CD8-positive, alpha-beta T cell (primary cell): ENCODE measurements at regions of chr6 and their contacts with region 1.

Region 1: GRCh38 chr6:2999618-3000557 is at the start of gene NQO2:
- DNase-seq: peak; percentile 83 to 96 (median 91)
- ATAC-seq: peak; percentile 72
- H3K4me3 ChIP-seq: peak within 1 kb of the TSS; percentile 83 to 98
- H3K4me3 Mint-ChIP-seq: peak within 1 kb of the TSS; percentile 91
- H3K27ac ChIP-seq: peak within 1 kb of the TSS; percentile 70 to 75
- H3K27ac Mint-ChIP-seq: peak within 1 kb of the TSS; percentile 92
- H3K4me1 ChIP-seq: peaks cover 13% of the 10 kb centered on the region
- H3K4me1 Mint-ChIP-seq: peaks cover 15% of the 10 kb centered on the region
- H3K27me3 ChIP-seq: no peaks in the 10 kb centered on the region
- H3K27me3 Mint-ChIP-seq: no peaks in the 10 kb centered on the region
- CTCF ChIP-seq: no peak
- total RNA-seq, gene NQO2: 3.8 to 5.5 TPM

Region 2: DNA sequence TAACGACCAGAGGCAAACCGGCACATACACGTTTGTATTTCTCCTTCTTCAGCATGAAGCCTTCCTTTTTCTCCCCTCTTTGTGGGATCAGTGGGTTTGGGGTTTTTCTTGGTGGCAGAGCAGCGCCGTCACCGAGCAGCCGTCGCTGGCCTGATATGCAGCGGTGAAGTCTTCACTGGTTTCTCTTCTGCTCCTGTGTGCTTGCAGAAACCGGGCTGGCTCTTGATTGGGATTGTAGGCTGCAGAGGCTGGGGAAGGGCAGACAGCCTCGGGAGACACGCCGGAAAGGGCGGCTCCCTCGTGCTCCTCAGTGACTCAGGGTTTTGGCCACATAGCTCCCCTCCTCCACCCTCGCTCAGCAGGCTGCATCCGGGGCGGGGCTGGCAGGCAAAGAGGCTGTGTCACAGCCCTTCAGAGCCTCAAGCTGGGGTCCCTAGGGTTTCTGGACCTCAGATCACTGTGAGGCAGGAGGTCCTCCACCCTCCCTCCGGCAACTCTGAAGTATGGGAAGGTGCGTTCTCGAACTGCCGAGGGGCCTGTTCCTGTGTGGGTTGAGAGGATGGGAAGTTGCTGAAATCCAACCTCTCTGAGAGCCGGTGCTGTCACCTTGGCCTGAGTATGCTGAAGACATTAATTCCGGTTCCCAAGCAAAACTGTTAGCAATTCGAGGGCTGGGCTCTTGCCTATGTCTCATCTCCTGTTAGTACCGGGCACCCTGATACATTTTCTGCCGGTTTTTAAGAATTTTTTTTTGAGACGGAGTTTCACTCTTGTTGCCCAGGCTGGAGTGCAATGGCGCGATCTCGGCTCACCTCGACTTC is 24.0 kb after region 1 on chr6:
- CTCF ChIA-PET with region 1: interaction called, 13 read pairs
- POLR2A ChIA-PET with region 1: interaction called, 11 read pairs
- intact Hi-C with region 1: loop called (anchors 1 to 2 kb)
- DNase-seq: peak; percentile 55 to 93 (median 87)
- ATAC-seq: peak; percentile 88
- H3K4me3 ChIP-seq: peak overlapping the region; percentile 71 to 74
- H3K4me3 Mint-ChIP-seq: peak overlapping the region; percentile 88
- H3K27ac ChIP-seq: peak overlapping the region; percentile 39 to 86
- H3K27ac Mint-ChIP-seq: peak overlapping the region; percentile 86
- H3K4me1 ChIP-seq: peaks cover 40% of the 10 kb centered on the region
- H3K4me1 Mint-ChIP-seq: peaks cover 46% of the 10 kb centered on the region
- H3K27me3 ChIP-seq: no peaks in the 10 kb centered on the region
- H3K27me3 Mint-ChIP-seq: no peaks in the 10 kb centered on the region
- CTCF ChIP-seq: no peak

Region 3: DNA sequence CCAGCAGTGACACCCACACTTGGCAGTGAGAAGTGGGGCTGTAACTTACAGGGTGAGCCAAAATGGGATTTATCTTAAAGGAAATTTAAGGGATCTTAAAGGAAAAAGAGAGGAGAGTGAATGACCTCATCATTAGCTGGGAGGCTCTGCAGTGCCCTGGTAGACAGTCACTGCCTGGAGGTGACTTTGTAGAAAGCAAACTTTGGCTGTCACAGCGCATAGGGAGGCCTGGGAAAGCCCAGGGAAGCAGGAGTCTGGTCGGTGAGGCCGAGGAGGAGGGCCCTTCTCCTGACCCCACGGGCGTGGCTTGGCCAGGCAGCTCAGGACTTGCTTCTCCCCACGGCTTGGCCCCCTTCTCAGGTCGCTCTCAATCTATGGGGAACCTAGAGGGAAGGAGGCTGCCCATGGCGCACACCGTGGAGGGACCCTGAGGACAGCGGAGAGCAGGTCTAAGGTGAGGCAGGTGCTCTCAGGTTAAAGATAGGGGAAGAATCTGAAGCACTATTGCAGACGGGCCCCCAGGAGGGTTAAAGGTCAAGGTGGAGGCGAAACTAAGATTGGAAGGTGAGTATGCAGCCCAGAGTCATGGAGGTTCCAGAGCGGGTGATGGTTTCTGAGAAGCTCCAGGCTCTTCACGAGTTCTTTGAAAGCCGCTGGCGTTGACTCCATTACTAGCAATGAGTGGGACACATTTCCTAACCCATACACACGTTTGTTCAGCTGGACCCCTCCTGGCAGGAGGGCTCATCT is 52.8 kb after region 1 on chr6:
- CTCF ChIA-PET with region 1: interaction called, 21 read pairs
- POLR2A ChIA-PET with region 1: interaction called, 23 read pairs
- intact Hi-C with region 1: loop called (anchors 1 kb)
- DNase-seq: no peak
- ATAC-seq: no peak
- H3K4me3 ChIP-seq: no peak overlapping the region
- H3K4me3 Mint-ChIP-seq: peak overlapping the region; percentile 70
- H3K27ac ChIP-seq: no peak overlapping the region
- H3K27ac Mint-ChIP-seq: no peak overlapping the region
- H3K4me1 ChIP-seq: peaks cover 8% of the 10 kb centered on the region
- H3K4me1 Mint-ChIP-seq: peaks cover 13% of the 10 kb centered on the region
- H3K27me3 ChIP-seq: no peaks in the 10 kb centered on the region
- H3K27me3 Mint-ChIP-seq: no peaks in the 10 kb centered on the region
- CTCF ChIP-seq: no peak

Region 4: GRCh38 chr6:3068329-3069214 is 68.7 kb after region 1 on chr6 and contains the start of gene RIPK1:
- CTCF ChIA-PET with region 1: interaction called, 5 read pairs
- POLR2A ChIA-PET with region 1: interaction called, 15 read pairs
- intact Hi-C with region 1: loop called (anchors 1 kb)
- DNase-seq: peak; percentile 85 to 98 (median 93)
- ATAC-seq: peak; percentile 74
- H3K4me3 ChIP-seq: peak within 1 kb of the TSS; percentile 67 to 95
- H3K4me3 Mint-ChIP-seq: peak within 1 kb of the TSS; percentile 98
- H3K27ac ChIP-seq: peak within 1 kb of the TSS; percentile 93 to 96
- H3K27ac Mint-ChIP-seq: peak within 1 kb of the TSS; percentile 99
- H3K4me1 ChIP-seq: peaks cover 39% of the 10 kb centered on the region
- H3K4me1 Mint-ChIP-seq: peaks cover 62% of the 10 kb centered on the region
- H3K27me3 ChIP-seq: no peaks in the 10 kb centered on the region
- H3K27me3 Mint-ChIP-seq: no peaks in the 10 kb centered on the region
- CTCF ChIP-seq: peak; percentile 33
- total RNA-seq, gene RIPK1: 18.6 to 19.7 TPM

Region 5: GRCh38 chr6:3157131-3157927 is 157.4 kb after region 1 on chr6 and contains the start of gene TUBB2A:
- CTCF ChIA-PET with region 1: no interaction called
- POLR2A ChIA-PET with region 1: no interaction called
- intact Hi-C with region 1: loop called in 1 of 2 experiments (anchors 1 kb)
- DNase-seq: peak; percentile 77 to 94 (median 88)
- ATAC-seq: peak; percentile 61
- H3K4me3 ChIP-seq: peak within 1 kb of the TSS; percentile 65
- H3K4me3 Mint-ChIP-seq: peak within 1 kb of the TSS; percentile 92
- H3K27ac ChIP-seq: peak within 1 kb of the TSS; percentile 73 to 84
- H3K27ac Mint-ChIP-seq: peak within 1 kb of the TSS; percentile 91
- H3K4me1 ChIP-seq: peaks cover 29% of the 10 kb centered on the region
- H3K4me1 Mint-ChIP-seq: peaks cover 36% of the 10 kb centered on the region
- H3K27me3 ChIP-seq: no peaks in the 10 kb centered on the region
- H3K27me3 Mint-ChIP-seq: peaks cover 2% of the 10 kb centered on the region
- CTCF ChIP-seq: peak; percentile 65
- total RNA-seq, gene TUBB2A: 61.4 to 63.9 TPM

Region 6: DNA sequence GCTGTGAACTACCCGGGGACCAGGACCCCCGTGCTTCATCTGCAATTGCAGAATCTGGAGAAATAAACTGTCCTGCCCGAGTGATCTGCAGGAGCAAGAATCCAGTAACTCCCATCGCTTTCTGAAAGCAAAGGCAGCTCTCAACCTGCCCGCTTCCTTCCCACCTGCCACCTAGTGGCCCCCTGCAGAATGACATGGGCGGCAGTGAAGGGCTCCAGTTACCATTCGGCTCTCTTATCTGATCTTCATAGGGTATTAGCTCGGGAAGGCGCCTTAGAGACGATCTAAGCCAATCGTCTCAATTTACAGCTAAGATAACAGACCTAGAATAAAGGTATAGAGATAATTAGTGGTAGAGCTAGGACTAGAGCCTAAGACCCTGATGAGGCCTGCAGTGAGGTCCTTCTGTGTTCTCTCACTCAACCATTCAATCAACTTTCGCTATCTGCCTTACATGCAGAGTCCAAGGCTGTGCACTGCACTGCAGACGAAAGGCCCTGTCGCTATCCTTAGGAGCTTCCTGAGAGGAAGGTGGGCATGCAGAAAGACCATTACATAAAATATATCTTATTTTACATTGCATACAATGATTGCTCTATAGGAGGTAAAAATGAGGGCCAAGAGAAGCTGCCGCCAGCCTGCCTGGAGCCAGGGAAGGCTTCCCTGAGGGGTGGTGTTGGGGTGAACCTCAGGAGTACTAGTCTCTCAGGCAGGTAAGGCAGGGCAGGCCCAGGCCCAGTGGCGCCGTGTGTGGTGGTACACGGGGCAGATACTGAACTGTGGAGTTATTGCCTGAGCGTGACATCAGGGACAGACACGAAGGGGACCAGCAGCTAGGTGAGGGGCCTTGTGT is 251.8 kb after region 1 on chr6:
- CTCF ChIA-PET with region 1: interaction called, 5 read pairs
- POLR2A ChIA-PET with region 1: interaction called, 3 read pairs
- intact Hi-C with region 1: loop called in 1 of 2 experiments (anchors 2 kb)
- DNase-seq: peak; percentile 61 to 87 (median 80)
- ATAC-seq: peak; percentile 99
- H3K4me3 ChIP-seq: no peak overlapping the region
- H3K4me3 Mint-ChIP-seq: peak overlapping the region; percentile 32
- H3K27ac ChIP-seq: no peak overlapping the region
- H3K27ac Mint-ChIP-seq: no peak overlapping the region
- H3K4me1 ChIP-seq: no peaks in the 10 kb centered on the region
- H3K4me1 Mint-ChIP-seq: peaks cover 6% of the 10 kb centered on the region
- H3K27me3 ChIP-seq: peaks cover 3 to 5% of the 10 kb centered on the region in 2 experiments
- H3K27me3 Mint-ChIP-seq: peaks cover 26% of the 10 kb centered on the region
- CTCF ChIP-seq: peak; percentile 95